Caco-2 (cell line): ENCODE measurements at regions of chr11 and their contacts with region 1.

Region 1: GRCh38 chr11:8328848-8329330 is 65.2 kb upstream of the LMO1 start:
- DNase-seq: peak; percentile 83 to 87
- H3K4me3 ChIP-seq: no peak overlapping the region
- H3K4me3 Mint-ChIP-seq: peak overlapping the region; percentile 45
- H3K27ac Mint-ChIP-seq: no peak overlapping the region
- H3K4me1 ChIP-seq: no peaks in the 10 kb centered on the region
- H3K4me1 Mint-ChIP-seq: no peaks in the 10 kb centered on the region
- H3K27me3 ChIP-seq: no peaks in the 10 kb centered on the region
- H3K27me3 Mint-ChIP-seq: peaks cover 3% of the 10 kb centered on the region
- CTCF ChIP-seq: peak; percentile 73 to 87

Region 2: GRCh38 chr11:8584511-8584910 is 255.6 kb after region 1 on chr11:
- CTCF ChIA-PET with region 1: interaction called, 13 read pairs
- POLR2A ChIA-PET with region 1: no interaction called
- intact Hi-C with region 1: no loop called
- DNase-seq: no peak
- H3K4me3 ChIP-seq: no peak overlapping the region
- H3K4me3 Mint-ChIP-seq: no peak overlapping the region
- H3K27ac Mint-ChIP-seq: no peak overlapping the region
- H3K4me1 ChIP-seq: peaks cover 5% of the 10 kb centered on the region; the same call in 1 of the 2 replicates
- H3K4me1 Mint-ChIP-seq: no peaks in the 10 kb centered on the region
- H3K27me3 ChIP-seq: no peaks in the 10 kb centered on the region; the same call in 1 of the 2 replicates
- H3K27me3 Mint-ChIP-seq: peaks cover 6% of the 10 kb centered on the region
- CTCF ChIP-seq: no peak